Mammary epithelial cell (primary cell): ENCODE measurements at regions of chrX and their contacts with region 1.

Region 1: DNA sequence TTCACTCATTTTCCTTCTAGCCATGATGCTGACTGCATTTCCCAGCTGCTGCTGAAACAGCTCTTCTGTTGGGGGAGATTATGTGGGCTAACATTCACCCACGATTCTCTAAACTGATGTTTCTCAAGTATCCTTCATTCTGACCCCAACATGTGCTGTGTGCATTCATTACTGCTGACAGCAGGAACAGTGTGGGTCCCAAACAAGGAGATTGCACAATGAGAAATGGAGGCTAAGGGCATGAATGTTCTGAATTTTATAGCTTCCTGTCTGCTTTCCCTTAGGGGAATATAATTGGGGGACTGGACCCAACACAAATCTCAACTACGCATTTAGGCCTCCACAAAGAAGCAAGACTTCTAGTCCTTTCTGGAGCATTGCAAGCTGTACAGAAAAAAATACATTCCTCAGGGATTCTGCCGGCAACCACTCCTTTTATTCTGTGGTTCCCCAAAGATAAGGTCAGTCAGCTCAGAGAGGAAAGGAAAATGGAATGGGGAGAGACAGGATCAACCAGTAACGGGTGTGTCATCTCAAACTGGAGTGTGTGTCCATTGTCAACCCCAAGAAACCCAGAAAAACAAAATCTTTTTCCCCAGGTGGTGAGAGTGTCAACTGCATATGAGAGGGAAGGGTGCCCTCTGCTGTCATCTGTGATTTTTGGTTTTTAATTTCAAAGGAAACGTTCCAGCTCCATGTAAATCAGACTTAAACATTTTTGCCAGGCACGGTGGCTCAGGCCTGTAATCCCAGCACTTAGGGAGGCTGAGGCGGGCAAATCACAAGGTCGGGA is 81.5 kb upstream of the EGFL6 start:
- DNase-seq: peak; percentile 93
- H3K4me3 ChIP-seq: no peak overlapping the region
- H3K27ac ChIP-seq: peak overlapping the region; percentile 84
- H3K4me1 ChIP-seq: peaks cover 35% of the 10 kb centered on the region
- H3K27me3 ChIP-seq: no peaks in the 10 kb centered on the region
- CTCF ChIP-seq: peak; percentile 52 to 70

Region 2: DNA sequence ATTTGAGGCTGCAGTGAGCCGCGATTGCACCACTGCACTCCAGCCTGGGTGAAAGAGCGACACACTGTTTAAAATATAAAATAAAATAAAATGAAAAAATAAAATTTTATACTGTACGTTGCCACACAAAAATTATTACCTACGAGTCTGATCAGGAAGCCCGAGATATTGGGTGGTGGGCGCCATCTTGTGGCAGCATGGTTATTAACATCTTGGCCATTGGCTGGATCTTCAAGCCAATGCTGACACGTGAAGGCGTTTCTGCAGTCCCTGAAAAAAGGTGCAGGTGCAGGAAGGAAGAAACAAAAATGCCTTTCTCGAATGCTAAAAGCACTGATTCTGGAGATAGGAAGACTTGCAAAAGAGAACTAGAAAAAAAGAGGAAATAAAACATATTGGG is 586.4 kb before region 1 on chrX:
- CTCF ChIA-PET with region 1: no interaction called
- dilution Hi-C with region 1: no loop called
- in situ Hi-C with region 1: no loop called
- intact Hi-C with region 1: loop called (anchors 1 kb)
- DNase-seq: peak; percentile 48
- H3K4me3 ChIP-seq: no peak overlapping the region
- H3K27ac ChIP-seq: no peak overlapping the region
- H3K4me1 ChIP-seq: no peaks in the 10 kb centered on the region
- H3K27me3 ChIP-seq: no peaks in the 10 kb centered on the region
- CTCF ChIP-seq: peak; percentile 79

Region 3: DNA sequence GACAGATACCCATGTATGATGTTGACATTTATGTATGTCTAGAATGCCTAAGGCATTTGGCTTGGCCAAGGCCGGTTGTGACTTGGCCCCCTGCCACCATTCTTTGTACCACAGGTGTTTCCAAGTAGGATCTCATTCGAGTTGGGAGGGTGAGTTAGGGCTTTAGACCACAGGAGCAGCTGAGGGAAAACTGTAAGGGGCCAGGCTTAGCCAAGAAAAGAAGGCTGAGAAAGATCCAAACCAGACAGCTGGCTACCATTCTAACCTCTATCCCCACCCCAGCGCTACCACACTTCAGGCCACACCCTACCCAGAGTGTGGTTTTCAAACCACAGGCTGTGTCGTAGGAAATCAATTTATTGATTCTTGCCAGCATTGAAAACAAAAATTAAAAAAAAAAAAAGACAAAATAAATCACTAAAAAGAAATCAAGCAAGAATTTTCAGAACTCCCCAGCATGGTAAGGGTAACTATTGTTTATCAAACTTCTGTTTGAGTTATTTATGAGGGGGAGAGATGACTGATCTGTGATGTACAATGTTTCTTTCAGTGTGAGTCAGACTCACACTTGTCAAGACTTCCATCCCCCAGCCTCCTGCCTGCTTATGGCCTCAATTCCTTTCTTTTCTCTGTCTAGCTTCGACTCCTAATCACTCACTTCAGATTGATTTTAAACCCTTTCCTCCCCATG is 503.2 kb before region 1 on chrX:
- CTCF ChIA-PET with region 1: no interaction called
- dilution Hi-C with region 1: no loop called
- in situ Hi-C with region 1: no loop called
- intact Hi-C with region 1: loop called (anchors 2 kb)
- DNase-seq: peak; percentile 97
- H3K4me3 ChIP-seq: no peak overlapping the region
- H3K27ac ChIP-seq: peak overlapping the region; percentile 82
- H3K4me1 ChIP-seq: peaks cover 34% of the 10 kb centered on the region
- H3K27me3 ChIP-seq: no peaks in the 10 kb centered on the region
- CTCF ChIP-seq: no peak

Region 4: DNA sequence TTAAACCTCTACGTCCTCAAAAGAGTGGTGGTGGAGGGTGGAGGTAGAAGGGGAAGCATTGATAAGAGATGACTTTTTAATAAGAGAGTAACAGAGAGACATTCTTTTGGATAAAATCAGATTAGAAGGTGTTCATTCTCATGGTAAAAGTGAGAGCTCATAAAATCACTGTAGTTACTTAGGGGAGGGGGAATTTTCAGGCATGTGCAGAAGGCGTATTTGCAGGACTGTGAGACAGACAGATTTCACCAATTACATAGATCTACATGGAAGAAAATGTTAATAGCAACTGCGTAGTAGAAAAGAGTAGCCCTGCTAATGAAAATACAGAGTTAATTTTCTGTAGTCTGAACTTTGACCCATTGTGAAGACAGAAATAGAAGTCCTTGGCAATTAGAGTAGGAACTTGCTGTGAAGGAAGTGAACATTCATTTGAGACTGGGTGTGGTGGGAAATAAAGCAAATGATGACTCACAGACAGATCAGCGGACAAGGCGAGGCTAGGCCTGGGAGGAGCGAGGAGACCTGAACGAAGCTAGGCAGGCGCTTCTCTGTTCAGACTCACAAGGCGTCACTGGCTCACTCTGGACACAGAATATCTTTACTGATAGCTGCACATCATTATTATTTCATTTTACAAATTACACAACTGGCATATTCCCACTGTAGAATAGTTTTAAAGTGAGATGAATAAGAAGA is 386.3 kb before region 1 on chrX:
- CTCF ChIA-PET with region 1: no interaction called
- dilution Hi-C with region 1: no loop called
- in situ Hi-C with region 1: loop called in 1 of 2 experiments (anchors 25 kb)
- intact Hi-C with region 1: loop called (anchors 5 kb)
- DNase-seq: peak; percentile 97
- H3K4me3 ChIP-seq: no peak overlapping the region
- H3K27ac ChIP-seq: peak overlapping the region; percentile 68
- H3K4me1 ChIP-seq: peaks cover 26% of the 10 kb centered on the region
- H3K27me3 ChIP-seq: no peaks in the 10 kb centered on the region
- CTCF ChIP-seq: no peak

Region 5: GRCh38 chrX:13223868-13224555 is 263.9 kb before region 1 on chrX:
- CTCF ChIA-PET with region 1: no interaction called
- dilution Hi-C with region 1: no loop called
- in situ Hi-C with region 1: no loop called
- intact Hi-C with region 1: loop called (anchors 1 kb)
- DNase-seq: peak; percentile 96
- H3K4me3 ChIP-seq: no peak overlapping the region
- H3K27ac ChIP-seq: peak overlapping the region; percentile 44
- H3K4me1 ChIP-seq: peaks cover 34% of the 10 kb centered on the region
- H3K27me3 ChIP-seq: no peaks in the 10 kb centered on the region
- CTCF ChIP-seq: peak; percentile 22 to 35

Region 6: GRCh38 chrX:13293700-13294099 is 194.2 kb before region 1 on chrX:
- CTCF ChIA-PET with region 1: no interaction called
- dilution Hi-C with region 1: no loop called
- in situ Hi-C with region 1: no loop called
- intact Hi-C with region 1: loop called (anchors 1 kb)
- DNase-seq: peak; percentile 95
- H3K4me3 ChIP-seq: no peak overlapping the region
- H3K27ac ChIP-seq: peak overlapping the region; percentile 93
- H3K4me1 ChIP-seq: peaks cover 11% of the 10 kb centered on the region
- H3K27me3 ChIP-seq: no peaks in the 10 kb centered on the region
- CTCF ChIP-seq: no peak

Region 7: GRCh38 chrX:13428055-13428786 is 59.7 kb before region 1 on chrX:
- CTCF ChIA-PET with region 1: no interaction called
- dilution Hi-C with region 1: no loop called
- in situ Hi-C with region 1: no loop called
- intact Hi-C with region 1: loop called (anchors 1 kb)
- DNase-seq: peak; percentile 92
- H3K4me3 ChIP-seq: no peak overlapping the region
- H3K27ac ChIP-seq: peak overlapping the region; percentile 77
- H3K4me1 ChIP-seq: peaks cover 47% of the 10 kb centered on the region
- H3K27me3 ChIP-seq: no peaks in the 10 kb centered on the region
- CTCF ChIP-seq: no peak